ENCODE measurements at regions of chr15 and their contacts with region 1.

Region 1: DNA sequence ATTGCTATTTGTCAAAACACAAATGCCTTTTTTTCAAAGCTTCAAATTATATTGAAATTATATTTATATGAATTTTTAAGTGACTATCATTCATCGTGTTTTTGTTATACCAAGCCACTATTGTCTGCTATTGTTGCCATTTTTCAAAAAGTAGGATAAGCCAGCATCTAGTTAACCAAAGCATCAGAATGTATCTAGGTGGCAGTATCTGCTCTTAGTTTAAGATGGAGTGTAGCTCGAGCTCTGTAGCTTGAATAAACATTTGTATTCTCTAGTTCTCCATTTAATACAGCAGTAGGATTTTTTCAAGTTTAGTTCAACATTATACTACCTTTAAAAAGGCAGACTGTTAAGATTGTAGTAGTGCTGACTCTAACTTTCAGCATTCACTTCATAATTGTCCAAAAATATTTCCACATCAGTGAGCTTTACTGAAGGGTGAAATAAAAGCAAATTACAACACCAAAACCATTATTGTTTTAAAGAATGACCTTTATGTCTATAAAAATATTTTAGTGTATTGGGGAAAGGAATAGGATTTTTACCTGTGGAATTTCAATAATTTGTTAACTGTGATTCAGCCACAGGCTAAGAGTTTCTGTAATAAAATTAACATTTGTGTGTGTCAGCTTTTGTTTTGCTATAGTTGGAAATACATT is 19.6 kb upstream of the C15orf61 start:
- DNase-seq: peak in 3 of 14 experiments; percentile 28 to 39 (median 35)
- ATAC-seq: no peak
- H3K4me3 ChIP-seq: no peak overlapping the region
- H3K4me3 Mint-ChIP-seq: no peak overlapping the region
- H3K27ac ChIP-seq: no peak overlapping the region
- H3K27ac Mint-ChIP-seq: no peak overlapping the region
- H3K4me1 ChIP-seq: no peaks in the 10 kb centered on the region
- H3K4me1 Mint-ChIP-seq: no peaks in the 10 kb centered on the region
- H3K27me3 ChIP-seq: no peaks in the 10 kb centered on the region
- H3K27me3 Mint-ChIP-seq: no peaks in the 10 kb centered on the region
- CTCF ChIP-seq: peak; percentile 49

Region 2: GRCh38 chr15:67587754-67588153 is 86.4 kb after region 1 on chr15:
- CTCF ChIA-PET with region 1: no interaction called
- POLR2A ChIA-PET with region 1: no interaction called
- intact Hi-C with region 1: loop called in 1 of 2 experiments (anchors 5 kb)
- DNase-seq: no peak
- ATAC-seq: no peak
- H3K4me3 ChIP-seq: no peak overlapping the region
- H3K4me3 Mint-ChIP-seq: no peak overlapping the region
- H3K27ac ChIP-seq: no peak overlapping the region
- H3K27ac Mint-ChIP-seq: no peak overlapping the region
- H3K4me1 ChIP-seq: no peaks in the 10 kb centered on the region
- H3K4me1 Mint-ChIP-seq: no peaks in the 10 kb centered on the region
- H3K27me3 ChIP-seq: no peaks in the 10 kb centered on the region
- H3K27me3 Mint-ChIP-seq: no peaks in the 10 kb centered on the region
- CTCF ChIP-seq: no peak

Measured in CD4-positive, alpha-beta T cell (primary cell).